ENCODE measurements at regions of chr2 and their contacts with region 1.

Region 1: DNA sequence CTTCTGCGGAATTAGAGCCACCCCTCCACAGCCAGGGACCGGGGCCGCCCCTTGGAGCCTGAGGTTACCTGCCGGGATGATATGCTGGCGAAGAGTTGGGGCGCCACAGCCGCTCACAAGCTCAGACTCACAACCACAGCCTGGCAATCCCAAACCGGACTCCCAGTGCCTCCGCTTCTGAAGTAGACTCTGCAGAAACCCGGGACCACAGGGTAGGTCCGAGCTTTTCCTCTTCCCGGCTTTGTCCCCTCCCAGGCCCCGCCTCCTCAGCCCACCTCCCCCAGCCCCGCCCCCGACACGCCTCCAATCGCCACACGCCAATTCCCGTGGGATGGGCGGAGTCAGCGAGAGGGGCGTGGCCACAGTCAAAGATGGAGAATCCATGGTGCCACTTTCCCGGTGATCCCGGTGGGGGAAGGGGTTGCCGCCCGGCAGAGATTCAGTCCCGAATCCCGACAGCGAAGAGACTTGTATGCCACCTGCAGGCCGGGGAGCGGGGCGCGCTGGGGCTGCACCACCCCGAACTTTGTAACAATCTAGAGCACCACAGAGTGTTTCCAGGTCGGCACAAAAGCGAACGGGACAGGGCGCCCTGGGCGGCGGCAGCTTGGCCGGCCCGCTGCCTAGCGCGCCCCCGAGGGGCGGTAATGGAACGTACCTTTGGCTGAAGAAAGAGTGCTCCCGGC is at the start of gene IDH1:
- DNase-seq: peak; percentile 98
- H3K4me3 ChIP-seq: peak within 1 kb of the TSS; percentile 52 to 95
- H3K27ac ChIP-seq: peak within 1 kb of the TSS; percentile 74 to 87
- H3K4me1 ChIP-seq: peaks cover 0 to 8% of the 10 kb centered on the region in 2 experiments; a peak in 3 of 4 replicates
- H3K27me3 ChIP-seq: no peaks in the 10 kb centered on the region
- CTCF ChIP-seq: peak; percentile 69
- EP300 ChIP-seq: no peak
- RAD21 ChIP-seq: peak; percentile 60
- polyA plus RNA-seq, gene IDH1: 43.4 and 57.2 TPM in 2 replicates

Region 2: GRCh38 chr2:208240619-208241209 is 14.3 kb before region 1 on chr2:
- CTCF ChIA-PET with region 1: interaction called, 14 read pairs
- POLR2A ChIA-PET with region 1: no interaction called
- DNase-seq: no peak
- H3K4me3 ChIP-seq: no peak overlapping the region
- H3K27ac ChIP-seq: no peak overlapping the region
- H3K4me1 ChIP-seq: no peaks in the 10 kb centered on the region
- H3K27me3 ChIP-seq: no peaks in the 10 kb centered on the region
- CTCF ChIP-seq: no peak
- EP300 ChIP-seq: no peak
- RAD21 ChIP-seq: no peak

Region 3: DNA sequence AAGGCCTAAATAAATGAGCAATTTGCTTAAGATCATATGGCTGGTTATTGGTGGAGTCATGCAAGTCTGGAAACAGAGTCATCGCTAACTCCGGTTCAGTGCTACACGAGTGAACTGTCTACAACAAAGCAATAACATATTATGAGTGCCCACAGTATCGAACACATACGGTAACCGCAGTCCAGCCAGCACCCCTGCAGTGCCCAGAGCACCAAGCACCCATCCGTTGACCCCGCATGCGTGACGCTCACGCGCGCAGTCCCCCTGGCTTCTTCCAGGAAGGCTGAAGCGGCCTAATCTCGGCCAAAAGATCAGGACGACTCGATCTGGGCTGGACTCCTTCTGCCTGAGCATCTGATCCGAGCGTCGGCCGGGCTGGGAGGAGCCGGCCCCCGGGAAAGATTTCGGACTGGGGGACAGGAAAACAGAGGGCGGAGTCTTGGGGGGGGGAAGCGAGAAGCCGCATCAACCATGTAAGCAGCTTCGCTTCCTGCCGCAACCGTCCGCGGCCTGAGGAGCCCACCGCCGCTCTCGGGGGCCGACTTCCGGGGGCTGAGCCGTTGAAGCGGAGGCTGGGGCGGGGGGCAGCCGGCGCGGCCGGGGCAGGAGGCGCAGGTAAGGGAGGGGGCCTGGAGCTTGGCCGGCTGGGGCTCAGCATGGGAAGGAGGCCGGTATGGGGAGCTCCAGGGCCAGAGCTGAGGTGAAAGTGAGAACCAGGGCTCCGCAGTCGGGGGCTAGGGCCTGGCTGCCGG is 11.0 kb after region 1 on chr2 and contains the start of gene PIKFYVE:
- CTCF ChIA-PET with region 1: interaction called, 22 read pairs
- POLR2A ChIA-PET with region 1: interaction called, 28 read pairs
- DNase-seq: peak; percentile 96
- H3K4me3 ChIP-seq: peak within 1 kb of the TSS; percentile 84 to 85
- H3K27ac ChIP-seq: peak within 1 kb of the TSS; percentile 90 to 96
- H3K4me1 ChIP-seq: peaks cover 5 to 12% of the 10 kb centered on the region in 2 experiments; a peak in 2 of 4 replicates
- H3K27me3 ChIP-seq: no peaks in the 10 kb centered on the region
- CTCF ChIP-seq: no peak
- EP300 ChIP-seq: peak in 1 of 2 experiments; percentile 38; a peak in 2 of 4 replicates
- RAD21 ChIP-seq: no peak
- polyA plus RNA-seq, gene PIKFYVE: 7.0 and 10.2 TPM in 2 replicates